AG04449 (cell line): ENCODE measurements at regions of chr1 and their contacts with region 1.

Region 1: DNA sequence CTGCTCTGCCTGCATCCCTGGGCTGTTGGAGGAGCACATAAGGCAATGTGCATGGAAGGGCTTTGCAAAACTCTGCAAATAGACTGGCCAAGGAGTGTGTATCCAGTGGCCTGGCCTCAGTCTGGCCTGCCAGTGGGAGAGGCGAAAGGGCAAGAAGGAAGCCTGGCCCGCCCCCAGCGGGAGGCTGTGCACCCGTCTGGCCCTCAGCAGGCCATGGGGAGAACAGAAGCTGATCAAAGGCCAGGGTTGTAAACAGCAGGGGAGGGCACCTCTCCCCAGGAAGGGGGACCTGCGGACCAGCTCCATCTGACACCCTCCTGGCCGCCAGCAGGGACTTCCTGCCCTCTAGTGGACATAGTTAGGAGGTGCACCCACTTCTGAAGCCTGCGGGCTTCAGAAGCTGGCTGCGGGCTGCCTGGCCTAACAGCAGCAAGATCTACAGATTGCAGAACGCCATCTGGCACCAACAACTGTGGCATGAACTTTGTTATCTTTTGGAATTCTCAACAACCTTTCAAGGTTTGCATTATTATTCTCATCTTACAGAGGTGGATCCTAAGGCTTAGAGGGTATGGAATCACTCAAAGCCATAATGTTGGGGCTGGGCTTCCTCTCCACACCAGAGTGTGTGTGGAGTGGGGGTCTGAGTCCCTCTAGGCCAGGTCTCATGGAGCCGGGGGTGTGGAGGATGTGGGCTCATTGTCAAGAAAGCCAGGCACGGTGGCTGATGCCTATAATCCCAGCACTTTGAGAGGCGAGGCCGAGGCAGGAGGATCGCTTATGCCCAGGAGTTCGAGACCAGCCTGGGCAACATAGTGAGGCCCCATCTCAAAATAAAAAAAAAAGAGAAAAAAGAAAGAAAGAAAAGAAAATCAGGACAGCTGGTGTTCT is 18.9 kb upstream of the CDK18 start:
- DNase-seq: no peak
- H3K4me3 ChIP-seq: no peak overlapping the region
- CTCF ChIP-seq: peak; percentile 89

Region 2: GRCh38 chr1:205335643-205336091 is 149.9 kb before region 1 on chr1:
- CTCF ChIA-PET with region 1: interaction called, 95 read pairs
- POLR2A ChIA-PET with region 1: no interaction called
- DNase-seq: no peak
- H3K4me3 ChIP-seq: no peak overlapping the region
- CTCF ChIP-seq: peak; percentile 99

Region 3: DNA sequence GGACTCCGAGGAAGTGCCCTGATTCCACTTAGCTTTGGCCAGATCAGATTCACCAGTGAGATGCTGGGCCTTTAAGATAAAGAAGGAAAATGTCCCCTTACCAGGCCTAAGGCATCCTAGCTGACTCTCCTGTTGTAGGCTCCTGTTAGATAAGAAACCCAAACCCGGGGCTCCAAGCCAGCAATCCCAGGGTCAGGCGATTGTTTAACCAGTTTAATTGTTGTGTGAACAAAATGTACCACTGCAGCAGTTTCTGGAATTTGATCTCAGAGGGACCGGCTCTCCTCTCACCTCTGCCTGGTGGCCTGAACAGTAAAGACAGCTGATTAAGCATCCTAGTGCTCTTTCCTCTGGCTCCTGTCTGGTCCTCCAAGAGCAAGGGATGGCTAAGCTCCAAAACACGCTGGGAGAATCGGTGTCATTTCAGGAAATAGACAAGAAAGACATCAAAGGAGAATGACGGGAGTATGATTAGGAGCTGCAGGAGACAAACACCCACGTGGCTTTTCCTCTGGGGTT is 119.6 kb before region 1 on chr1:
- CTCF ChIA-PET with region 1: interaction called, 20 read pairs
- POLR2A ChIA-PET with region 1: no interaction called
- DNase-seq: no peak
- H3K4me3 ChIP-seq: no peak overlapping the region
- CTCF ChIP-seq: no peak

Region 4: GRCh38 chr1:205396967-205397616 is 88.5 kb before region 1 on chr1:
- CTCF ChIA-PET with region 1: interaction called, 151 read pairs
- POLR2A ChIA-PET with region 1: no interaction called
- DNase-seq: no peak
- H3K4me3 ChIP-seq: no peak overlapping the region
- CTCF ChIP-seq: peak; percentile 35

Region 5: DNA sequence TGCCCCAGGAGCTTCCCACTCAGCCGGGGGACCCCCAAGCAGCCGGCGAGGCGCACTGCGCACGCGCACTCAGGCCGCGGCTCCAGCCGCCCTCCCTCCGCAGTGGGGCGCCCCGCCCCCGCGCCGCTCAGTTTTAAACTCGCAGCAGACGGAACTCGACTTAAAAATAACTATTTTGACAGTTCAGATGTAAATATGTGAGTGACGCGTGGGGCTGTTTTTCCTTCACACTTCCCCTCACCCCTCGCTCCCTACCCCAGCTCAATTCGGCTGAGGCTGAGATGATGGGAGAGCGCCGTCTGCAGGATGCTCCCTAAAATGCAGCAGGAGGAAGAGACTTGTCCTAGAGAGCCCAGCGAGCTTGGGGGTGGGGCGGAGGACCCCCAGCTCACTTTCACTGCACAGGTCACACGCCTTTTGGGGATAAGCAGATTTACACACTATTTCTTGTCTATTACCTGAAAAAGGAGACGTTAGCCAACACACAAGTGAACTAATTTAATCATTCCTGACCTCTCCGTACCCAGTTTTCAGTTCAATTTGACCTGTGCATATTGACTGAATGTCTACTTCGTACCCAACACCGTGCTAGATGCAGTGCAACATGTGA is 54.8 kb before region 1 on chr1:
- CTCF ChIA-PET with region 1: interaction called, 14 read pairs
- POLR2A ChIA-PET with region 1: no interaction called
- DNase-seq: no peak
- H3K4me3 ChIP-seq: peak overlapping the region; percentile 56
- CTCF ChIP-seq: peak; percentile 82

Region 6: GRCh38 chr1:205458777-205459566 is 26.6 kb before region 1 on chr1:
- CTCF ChIA-PET with region 1: interaction called, 22 read pairs
- POLR2A ChIA-PET with region 1: no interaction called
- DNase-seq: no peak
- H3K4me3 ChIP-seq: no peak overlapping the region
- CTCF ChIP-seq: no peak

Region 7: DNA sequence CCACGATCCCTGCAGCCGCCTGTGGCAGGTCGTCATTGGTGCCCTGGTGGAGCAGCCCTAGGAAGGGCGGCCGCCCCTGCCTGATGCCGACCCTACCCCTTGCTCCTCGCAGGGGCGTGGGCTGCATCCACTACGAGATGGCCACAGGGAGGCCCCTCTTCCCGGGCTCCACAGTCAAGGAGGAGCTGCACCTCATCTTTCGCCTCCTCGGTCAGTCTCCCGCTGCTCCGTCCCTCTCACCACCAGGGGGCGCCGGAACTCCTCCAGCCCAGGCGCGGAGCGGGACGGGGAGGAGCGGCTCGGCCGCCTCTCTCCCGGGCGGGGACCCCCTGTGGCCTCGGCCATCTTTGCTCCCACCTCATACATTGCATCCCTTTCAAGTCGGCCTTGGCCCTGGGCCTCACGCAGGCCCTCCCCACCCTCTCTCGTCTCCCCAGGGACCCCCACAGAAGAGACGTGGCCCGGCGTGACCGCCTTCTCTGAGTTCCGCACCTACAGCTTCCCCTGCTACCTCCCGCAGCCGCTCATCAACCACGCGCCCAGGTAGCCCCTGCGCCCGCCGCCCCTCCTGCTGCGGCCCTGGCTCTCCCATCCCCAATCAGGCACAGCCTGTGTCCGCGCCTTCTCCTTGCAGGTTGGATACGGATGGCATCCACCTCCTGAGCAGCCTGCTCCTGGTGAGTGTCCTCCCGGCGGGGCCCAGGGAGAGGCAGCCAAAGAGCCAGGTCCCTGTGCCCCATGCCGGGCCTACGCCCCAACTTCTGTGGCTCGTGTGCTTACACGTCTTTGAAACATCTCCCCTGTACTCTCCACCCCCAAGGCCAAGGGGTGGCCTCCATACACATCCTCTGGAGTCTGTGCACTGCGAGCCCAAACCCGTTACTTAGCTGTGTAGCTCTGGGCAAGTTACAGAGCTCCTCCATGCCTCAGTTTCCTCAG is 43.6 kb after region 1 on chr1:
- CTCF ChIA-PET with region 1: interaction called, 709 read pairs
- POLR2A ChIA-PET with region 1: no interaction called
- DNase-seq: no peak
- H3K4me3 ChIP-seq: peak overlapping the region; percentile 45
- CTCF ChIP-seq: peak; percentile 93

Region 8: GRCh38 chr1:205810448-205811157 is 325.0 kb after region 1 on chr1:
- CTCF ChIA-PET with region 1: no interaction called
- POLR2A ChIA-PET with region 1: no interaction called
- DNase-seq: no peak
- H3K4me3 ChIP-seq: no peak overlapping the region
- CTCF ChIP-seq: peak; percentile 26